ENCODE measurements at regions of chr2 and their contacts with region 1.

Region 1: DNA sequence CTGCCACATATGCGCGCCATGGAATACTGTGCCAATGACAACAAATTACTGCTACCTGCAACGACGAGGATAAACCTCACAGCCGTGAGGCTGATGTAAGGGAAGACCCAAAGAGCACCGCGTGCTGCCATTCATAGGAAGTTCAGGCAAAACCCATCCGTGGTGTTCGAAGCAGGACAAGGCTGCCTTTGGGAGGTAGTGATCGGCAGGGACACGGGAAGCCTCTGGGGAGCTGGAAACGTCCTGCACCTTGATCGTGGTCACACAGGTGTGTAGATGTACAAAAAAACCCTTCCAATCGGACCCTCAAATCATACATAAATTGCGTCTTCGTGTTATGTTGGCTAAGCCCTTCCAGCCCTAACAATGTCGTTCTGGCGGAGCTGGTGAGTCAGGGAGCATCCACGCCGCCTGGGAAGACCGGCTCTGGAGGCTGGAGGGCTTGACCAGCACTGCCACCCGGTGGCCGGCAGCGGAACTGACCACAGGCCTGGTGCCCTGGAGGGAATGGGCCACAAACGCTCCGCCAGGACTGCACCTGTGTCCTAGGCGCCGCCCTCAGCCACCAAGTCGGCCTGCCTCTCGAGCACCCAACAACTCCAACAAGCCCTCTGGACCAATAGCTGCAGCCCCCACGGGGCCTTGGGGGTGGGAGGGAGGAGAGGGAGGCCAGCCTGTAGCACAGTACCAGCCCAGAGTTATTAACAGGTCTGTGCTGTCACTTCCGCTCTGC is 4.1 kb upstream of the NEURL3 start:
- DNase-seq: peak; percentile 83 to 88 (median 87)
- ATAC-seq: peak; percentile 93
- H3K4me3 ChIP-seq: no peak overlapping the region
- H3K27ac ChIP-seq: no peak overlapping the region; the same call in 2 of the 3 replicates
- H3K4me1 ChIP-seq: peaks cover 7 to 24% of the 10 kb centered on the region in 2 experiments; a peak in 4 of 5 replicates
- H3K27me3 ChIP-seq: peaks cover 9 to 50% of the 10 kb centered on the region in 2 experiments; a peak in 4 of 5 replicates
- CTCF ChIP-seq: peak; percentile 96 to 97 (median 96)
- EP300 ChIP-seq: no peak
- POLR2A ChIP-seq: no peak
- RAD21 ChIP-seq: peak; percentile 89 to 96

Region 2: GRCh38 chr2:95799892-95800291 is 709.4 kb before region 1 on chr2:
- CTCF ChIA-PET with region 1: no interaction called
- POLR2A ChIA-PET with region 1: no interaction called
- in situ Hi-C with region 1: loop called (anchors 25 kb)
- intact Hi-C with region 1: no loop called
- DNase-seq: no peak
- ATAC-seq: no peak; the same call in 2 of the 3 replicates
- H3K4me3 ChIP-seq: no peak overlapping the region
- H3K27ac ChIP-seq: no peak overlapping the region
- H3K4me1 ChIP-seq: no peaks in the 10 kb centered on the region
- H3K27me3 ChIP-seq: no peaks in the 10 kb centered on the region
- CTCF ChIP-seq: no peak
- EP300 ChIP-seq: no peak
- POLR2A ChIP-seq: no peak
- RAD21 ChIP-seq: no peak

Region 3: DNA sequence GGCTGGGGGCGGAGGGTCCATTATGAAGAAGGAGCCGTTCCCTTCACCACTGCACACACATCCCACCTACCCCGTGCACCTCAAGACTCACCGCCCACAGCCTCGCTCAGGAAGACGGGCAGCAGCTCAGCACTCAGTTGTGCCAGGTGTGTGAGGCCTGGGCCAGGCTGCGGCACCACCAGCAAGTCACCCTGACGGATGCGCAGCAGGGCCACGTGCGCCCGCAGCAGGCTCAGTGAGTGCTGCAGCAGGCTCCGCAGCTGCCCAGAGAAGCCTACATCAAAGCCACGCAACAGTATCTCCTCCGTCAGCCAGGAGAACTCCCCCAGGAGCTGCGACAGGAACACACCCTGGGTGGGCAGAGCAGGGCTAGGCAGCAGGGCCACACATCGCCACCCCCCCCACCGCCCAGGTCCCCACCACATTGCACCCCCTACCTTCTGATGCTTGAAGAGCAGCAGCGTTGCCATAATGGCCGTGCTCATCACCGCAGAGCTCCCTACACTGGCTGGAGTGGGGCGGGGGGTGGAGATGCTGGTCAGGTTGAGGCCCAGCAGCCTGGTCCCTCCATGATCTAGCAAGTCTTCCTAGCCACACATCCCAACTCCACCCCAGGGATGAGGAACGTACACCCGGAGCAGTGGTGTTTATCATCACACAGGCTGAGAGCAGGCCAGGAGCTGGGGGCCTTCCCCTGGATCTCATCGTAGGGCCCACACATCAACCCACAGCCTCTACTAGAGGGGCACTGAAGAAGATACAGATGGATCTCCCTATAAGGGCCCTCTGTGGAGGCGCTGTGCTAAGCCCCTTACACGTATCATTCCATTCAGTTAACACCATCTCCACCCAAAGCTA is 484.7 kb before region 1 on chr2:
- CTCF ChIA-PET with region 1: no interaction called
- POLR2A ChIA-PET with region 1: no interaction called
- in situ Hi-C with region 1: loop called (anchors 25 kb)
- intact Hi-C with region 1: no loop called
- DNase-seq: peak in 2 of 4 experiments; percentile 8
- ATAC-seq: 0 out of 3 replicates have a peak, but pooled peaks have one; percentile 9
- H3K4me3 ChIP-seq: no peak overlapping the region
- H3K27ac ChIP-seq: no peak overlapping the region
- H3K4me1 ChIP-seq: peaks cover 0 to 13% of the 10 kb centered on the region in 2 experiments; a peak in 2 of 5 replicates
- H3K27me3 ChIP-seq: no peaks in the 10 kb centered on the region; a peak in 1 of 5 replicates
- CTCF ChIP-seq: no peak
- EP300 ChIP-seq: no peak
- POLR2A ChIP-seq: no peak
- RAD21 ChIP-seq: no peak

Region 4: GRCh38 chr2:96138179-96139145 is 370.8 kb before region 1 on chr2 and contains the start of gene ASTL:
- CTCF ChIA-PET with region 1: interaction called, 40 read pairs
- POLR2A ChIA-PET with region 1: no interaction called
- in situ Hi-C with region 1: loop called (anchors 5 kb)
- intact Hi-C with region 1: loop called (anchors 2 kb)
- DNase-seq: peak; percentile 41 to 70 (median 60)
- ATAC-seq: peak; percentile 87
- H3K4me3 ChIP-seq: no peak within 1 kb of the TSS
- H3K27ac ChIP-seq: no peak within 1 kb of the TSS
- H3K4me1 ChIP-seq: peaks cover 0 to 9% of the 10 kb centered on the region in 2 experiments; a peak in 3 of 5 replicates
- H3K27me3 ChIP-seq: peaks cover 29 to 55% of the 10 kb centered on the region in 2 experiments
- CTCF ChIP-seq: peak; percentile 82 to 83 (median 82)
- EP300 ChIP-seq: no peak
- POLR2A ChIP-seq: no peak
- RAD21 ChIP-seq: peak; percentile 90
- polyA plus RNA-seq, gene ASTL: not detected

Region 5: DNA sequence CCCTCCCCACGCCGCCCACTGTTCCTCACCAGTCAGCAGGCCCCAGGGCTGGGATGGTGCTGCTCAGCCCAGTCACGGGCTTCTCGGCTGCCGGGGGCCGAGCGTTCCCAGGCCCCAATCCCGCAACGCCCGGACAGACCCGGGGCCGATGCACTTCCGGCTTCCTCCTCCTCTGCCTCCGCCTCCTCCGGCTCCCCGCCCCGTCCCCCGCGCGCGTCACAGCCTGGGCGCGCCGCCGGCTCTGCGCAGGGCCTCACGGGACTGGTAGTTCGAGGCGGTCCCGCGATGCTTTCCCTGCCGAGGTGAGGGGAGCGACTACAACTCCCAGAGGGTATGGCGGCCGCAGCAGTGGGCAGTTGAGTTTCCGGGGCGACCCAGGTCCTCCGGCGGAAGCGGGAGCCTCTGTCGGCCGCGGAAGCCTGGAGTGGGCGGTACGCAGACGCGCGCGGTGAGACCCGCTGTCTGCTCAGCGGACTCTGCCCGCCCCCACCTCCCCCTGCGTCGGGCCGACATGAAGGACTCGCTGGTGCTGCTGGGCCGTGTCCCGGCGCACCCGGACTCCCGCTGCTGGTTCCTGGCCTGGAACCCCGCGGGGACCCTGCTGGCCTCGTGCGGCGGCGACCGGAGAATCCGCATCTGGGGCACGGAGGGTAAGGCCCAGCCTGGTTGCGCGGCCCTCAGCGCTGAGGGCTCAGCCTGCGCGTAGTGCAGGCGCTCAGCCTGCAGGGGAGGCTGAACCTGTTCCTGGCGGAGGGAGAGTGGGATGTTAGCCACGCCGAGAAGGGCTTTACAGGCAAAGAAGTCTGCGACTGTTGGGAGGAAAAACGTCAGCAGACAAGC is 243.2 kb before region 1 on chr2 and contains the starts of genes CIAO1 and TMEM127:
- CTCF ChIA-PET with region 1: no interaction called
- POLR2A ChIA-PET with region 1: no interaction called
- in situ Hi-C with region 1: no loop called
- intact Hi-C with region 1: loop called (anchors 10 kb)
- DNase-seq: peak; percentile 93 to 98 (median 95)
- ATAC-seq: peak; percentile 98
- H3K4me3 ChIP-seq: peak within 1 kb of the TSS; percentile 84
- H3K27ac ChIP-seq: peak within 1 kb of the TSS; percentile 78
- H3K4me1 ChIP-seq: peaks cover 21 to 27% of the 10 kb centered on the region in 2 experiments
- H3K27me3 ChIP-seq: no peaks in the 10 kb centered on the region
- CTCF ChIP-seq: peak; percentile 19 to 37 (median 19); a peak in 4 of 6 replicates
- EP300 ChIP-seq: no peak
- POLR2A ChIP-seq: peak; percentile 85
- RAD21 ChIP-seq: no peak; a peak in 1 of 4 replicates
- polyA plus RNA-seq, gene CIAO1: 11.4 to 19.2 TPM
- polyA plus RNA-seq, gene TMEM127: 1.7 to 2.0 TPM

Region 6: GRCh38 chr2:96305091-96305978 is 203.9 kb before region 1 on chr2 and contains the start of gene SNRNP200:
- CTCF ChIA-PET with region 1: no interaction called
- POLR2A ChIA-PET with region 1: no interaction called
- in situ Hi-C with region 1: no loop called
- intact Hi-C with region 1: loop called (anchors 10 kb)
- DNase-seq: peak; percentile 89 to 95 (median 92)
- ATAC-seq: peak; percentile 98
- H3K4me3 ChIP-seq: peak within 1 kb of the TSS; percentile 93
- H3K27ac ChIP-seq: peak within 1 kb of the TSS; percentile 91
- H3K4me1 ChIP-seq: peaks cover 13 to 14% of the 10 kb centered on the region in 2 experiments; a peak in 3 of 5 replicates
- H3K27me3 ChIP-seq: no peaks in the 10 kb centered on the region
- CTCF ChIP-seq: no peak
- EP300 ChIP-seq: peak; percentile 43; the same call in 1 of the 2 replicates
- POLR2A ChIP-seq: peak; percentile 97
- RAD21 ChIP-seq: no peak
- polyA plus RNA-seq, gene SNRNP200: 87.9 to 155 TPM

Region 7: GRCh38 chr2:96407041-96407918 is 102.0 kb before region 1 on chr2:
- CTCF ChIA-PET with region 1: interaction called, 21 read pairs
- POLR2A ChIA-PET with region 1: no interaction called
- in situ Hi-C with region 1: loop called (anchors 5 kb)
- intact Hi-C with region 1: loop called (anchors 1 kb)
- DNase-seq: peak; percentile 66 to 78 (median 71)
- ATAC-seq: peak; percentile 88
- H3K4me3 ChIP-seq: no peak overlapping the region
- H3K27ac ChIP-seq: no peak overlapping the region
- H3K4me1 ChIP-seq: peaks cover 12 to 13% of the 10 kb centered on the region in 2 experiments; a peak in 4 of 5 replicates
- H3K27me3 ChIP-seq: peaks cover 13 to 31% of the 10 kb centered on the region in 2 experiments; a peak in 3 of 5 replicates
- CTCF ChIP-seq: peak; percentile 84 to 89 (median 87)
- EP300 ChIP-seq: no peak
- POLR2A ChIP-seq: no peak
- RAD21 ChIP-seq: peak; percentile 64 to 73